A673 (cell line): ENCODE measurements at regions of chr3 and their contacts with region 1.

Region 1: GRCh38 chr3:181709537-181710279 is 2.0 kb upstream of the SOX2 start:
- DNase-seq: peak; percentile 79
- H3K4me3 ChIP-seq: peak overlapping the region; percentile 78
- H3K27ac ChIP-seq: peak overlapping the region; percentile 63
- H3K4me1 ChIP-seq: peaks cover 41% of the 10 kb centered on the region
- H3K27me3 ChIP-seq: no peaks in the 10 kb centered on the region
- CTCF ChIP-seq: peak; percentile 89

Region 2: GRCh38 chr3:180762875-180763274 is 946.8 kb before region 1 on chr3:
- CTCF ChIA-PET with region 1: no interaction called
- POLR2A ChIA-PET with region 1: no interaction called
- intact Hi-C with region 1: no loop called
- DNase-seq: no peak
- H3K4me3 ChIP-seq: no peak overlapping the region
- H3K27ac ChIP-seq: no peak overlapping the region
- H3K4me1 ChIP-seq: no peaks in the 10 kb centered on the region
- H3K27me3 ChIP-seq: no peaks in the 10 kb centered on the region
- CTCF ChIP-seq: no peak

Region 3: GRCh38 chr3:181725131-181725731 is 15.5 kb after region 1 on chr3:
- CTCF ChIA-PET with region 1: no interaction called
- POLR2A ChIA-PET with region 1: interaction called, 23 read pairs
- intact Hi-C with region 1: no loop called
- DNase-seq: no peak
- H3K4me3 ChIP-seq: no peak overlapping the region
- H3K27ac ChIP-seq: no peak overlapping the region
- H3K4me1 ChIP-seq: peaks cover 29% of the 10 kb centered on the region
- H3K27me3 ChIP-seq: no peaks in the 10 kb centered on the region
- CTCF ChIP-seq: no peak

Region 4: GRCh38 chr3:182182531-182182968 is 472.8 kb after region 1 on chr3:
- CTCF ChIA-PET with region 1: no interaction called
- POLR2A ChIA-PET with region 1: no interaction called
- intact Hi-C with region 1: loop called (anchors 1 kb)
- DNase-seq: peak; percentile 85
- H3K4me3 ChIP-seq: no peak overlapping the region
- H3K27ac ChIP-seq: peak overlapping the region; percentile 90
- H3K4me1 ChIP-seq: peaks cover 44% of the 10 kb centered on the region
- H3K27me3 ChIP-seq: no peaks in the 10 kb centered on the region
- CTCF ChIP-seq: no peak

Region 5: DNA sequence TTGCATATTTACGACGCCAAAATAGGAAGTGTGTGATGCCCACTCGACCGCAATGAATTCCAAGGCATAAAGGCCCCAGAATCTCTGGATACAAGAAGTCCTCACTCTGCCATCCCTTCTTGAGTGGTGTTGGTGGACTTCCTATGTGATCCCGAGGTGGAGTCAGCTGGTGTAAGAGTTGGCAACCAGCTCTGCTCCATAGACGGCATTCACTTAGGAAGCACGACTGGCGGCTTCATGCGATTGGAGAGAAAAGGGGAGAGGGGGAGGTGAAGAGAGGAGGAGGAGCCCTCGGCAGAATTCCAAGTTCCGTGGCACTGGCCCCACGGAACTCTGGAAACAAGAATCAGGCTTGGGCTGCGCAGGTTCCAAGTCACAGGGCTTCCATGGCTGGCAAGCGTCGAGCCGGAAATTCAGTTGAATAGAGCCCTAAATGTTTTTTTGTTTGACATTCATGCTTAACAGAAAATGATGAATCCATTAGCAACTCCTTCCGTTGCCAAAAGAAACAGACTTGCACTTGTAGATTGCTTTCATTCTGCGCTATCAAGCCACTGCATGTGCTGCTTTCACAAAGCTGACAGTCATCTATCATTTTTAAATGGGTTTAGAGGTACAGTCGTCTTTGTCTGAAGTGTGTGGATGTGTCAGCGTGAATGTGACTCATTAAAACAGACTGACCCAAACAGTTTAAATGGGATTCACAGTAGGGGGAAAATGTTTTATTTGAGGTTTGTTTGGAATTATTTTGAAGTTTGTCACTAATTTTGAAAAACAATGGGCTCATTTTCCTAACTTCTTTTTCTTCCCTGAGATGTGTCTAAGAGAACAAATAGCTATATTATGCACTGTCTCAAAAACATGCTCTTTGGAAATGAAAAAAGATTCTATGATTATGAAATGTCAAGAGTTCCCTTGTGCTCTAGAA is 655.3 kb after region 1 on chr3:
- CTCF ChIA-PET with region 1: no interaction called
- POLR2A ChIA-PET with region 1: no interaction called
- intact Hi-C with region 1: loop called (anchors 10 kb)
- DNase-seq: peak; percentile 96
- H3K4me3 ChIP-seq: peak overlapping the region; percentile 7
- H3K27ac ChIP-seq: no peak overlapping the region
- H3K4me1 ChIP-seq: peaks cover 7% of the 10 kb centered on the region
- H3K27me3 ChIP-seq: peaks cover 56% of the 10 kb centered on the region
- CTCF ChIP-seq: 0 out of 2 replicates have a peak, but pooled peaks have one; percentile 1

Region 6: GRCh38 chr3:182618085-182618732 is 908.5 kb after region 1 on chr3:
- CTCF ChIA-PET with region 1: no interaction called
- POLR2A ChIA-PET with region 1: no interaction called
- intact Hi-C with region 1: loop called (anchors 1 kb)
- DNase-seq: peak; percentile 66
- H3K4me3 ChIP-seq: no peak overlapping the region
- H3K27ac ChIP-seq: no peak overlapping the region
- H3K4me1 ChIP-seq: no peaks in the 10 kb centered on the region
- H3K27me3 ChIP-seq: no peaks in the 10 kb centered on the region
- CTCF ChIP-seq: peak; percentile 71